ENCODE measurements at regions of chr5 and their contacts with region 1.

Region 1: GRCh38 chr5:135560858-135561257 is 17.9 kb downstream of the CXCL14 start:
- H3K4me3 ChIP-seq: no peak overlapping the region
- H3K27ac ChIP-seq: no peak overlapping the region
- H3K4me1 ChIP-seq: no peaks in the 10 kb centered on the region
- CTCF ChIP-seq: peak; percentile 88

Region 2: GRCh38 chr5:135039271-135040045 is 521.4 kb before region 1 on chr5:
- CTCF ChIA-PET with region 1: no interaction called
- POLR2A ChIA-PET with region 1: no interaction called
- H3K4me3 ChIP-seq: peak overlapping the region; percentile 26
- H3K27ac ChIP-seq: peak overlapping the region; percentile 34; the same call in 1 of the 2 replicates
- H3K4me1 ChIP-seq: peaks cover 9% of the 10 kb centered on the region
- CTCF ChIP-seq: no peak

Region 3: GRCh38 chr5:135578685-135579341 is 18.0 kb after region 1 on chr5 and contains the start of gene CXCL14:
- CTCF ChIA-PET with region 1: interaction called, 46 read pairs
- POLR2A ChIA-PET with region 1: no interaction called
- H3K4me3 ChIP-seq: peak within 1 kb of the TSS; percentile 11; the same call in 1 of the 2 replicates
- H3K27ac ChIP-seq: no peak within 1 kb of the TSS
- H3K4me1 ChIP-seq: no peaks in the 10 kb centered on the region; the same call in 1 of the 2 replicates
- CTCF ChIP-seq: no peak

Region 4: GRCh38 chr5:135729321-135729786 is 168.5 kb after region 1 on chr5:
- CTCF ChIA-PET with region 1: interaction called, 42 read pairs
- POLR2A ChIA-PET with region 1: no interaction called
- H3K4me3 ChIP-seq: no peak overlapping the region
- H3K27ac ChIP-seq: no peak overlapping the region
- H3K4me1 ChIP-seq: no peaks in the 10 kb centered on the region
- CTCF ChIP-seq: no peak

Region 5: DNA sequence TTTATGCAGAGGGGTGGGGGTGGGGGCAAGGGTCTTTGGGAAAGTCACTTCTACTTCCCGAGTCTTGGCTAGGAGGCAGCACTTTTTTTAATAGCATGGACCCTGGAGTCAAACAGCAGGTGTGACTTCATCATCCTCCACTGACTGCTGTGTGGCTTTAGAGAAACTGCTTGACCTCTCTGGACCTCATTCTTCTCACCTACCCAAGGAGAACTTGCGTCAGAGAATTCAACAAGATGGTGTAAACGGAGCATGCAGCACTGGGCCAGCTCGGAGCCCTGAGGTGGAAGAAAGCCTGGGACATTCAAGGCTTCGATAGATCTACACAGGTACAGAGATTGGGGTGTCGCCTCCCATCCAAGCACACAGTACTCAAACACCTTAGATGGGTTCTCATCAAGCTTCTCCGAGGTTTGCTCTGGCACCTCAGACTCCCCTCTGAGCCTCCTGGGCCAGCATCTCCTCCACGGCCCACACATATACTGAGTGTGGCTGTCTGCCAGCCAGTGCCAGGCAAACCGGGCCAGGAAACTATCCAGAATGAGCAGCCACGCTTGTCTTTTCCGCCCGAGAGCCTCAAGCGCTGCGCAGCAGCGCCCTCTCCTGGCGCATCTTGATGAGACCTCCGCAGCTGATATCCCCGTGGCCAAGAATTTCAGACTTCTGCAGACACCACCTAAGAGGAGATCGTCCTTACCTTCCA is 269.0 kb after region 1 on chr5:
- CTCF ChIA-PET with region 1: interaction called, 319 read pairs
- POLR2A ChIA-PET with region 1: no interaction called
- H3K4me3 ChIP-seq: no peak overlapping the region
- H3K27ac ChIP-seq: no peak overlapping the region
- H3K4me1 ChIP-seq: no peaks in the 10 kb centered on the region
- CTCF ChIP-seq: peak; percentile 76